ENCODE measurements at regions of chr5 and their contacts with region 1.

Region 1: GRCh38 chr5:150846654-150847333 is 473 bp downstream of the IRGM start:
- DNase-seq: peak; percentile 83
- ATAC-seq: peak; percentile 94
- H3K4me3 Mint-ChIP-seq: peak overlapping the region; percentile 75
- H3K27ac Mint-ChIP-seq: peak overlapping the region; percentile 95
- H3K4me1 Mint-ChIP-seq: peaks cover 39% of the 10 kb centered on the region
- H3K27me3 Mint-ChIP-seq: peaks cover 3% of the 10 kb centered on the region

Region 2: GRCh38 chr5:150458819-150459557 is 387.8 kb before region 1 on chr5:
- CTCF ChIA-PET with region 1: interaction called, 25 read pairs
- POLR2A ChIA-PET with region 1: interaction called, 4 read pairs
- DNase-seq: peak; percentile 90
- ATAC-seq: peak; percentile 93
- H3K4me3 Mint-ChIP-seq: peak overlapping the region; percentile 31
- H3K27ac Mint-ChIP-seq: peak overlapping the region; percentile 83
- H3K4me1 Mint-ChIP-seq: peaks cover 45% of the 10 kb centered on the region
- H3K27me3 Mint-ChIP-seq: no peaks in the 10 kb centered on the region

Region 3: DNA sequence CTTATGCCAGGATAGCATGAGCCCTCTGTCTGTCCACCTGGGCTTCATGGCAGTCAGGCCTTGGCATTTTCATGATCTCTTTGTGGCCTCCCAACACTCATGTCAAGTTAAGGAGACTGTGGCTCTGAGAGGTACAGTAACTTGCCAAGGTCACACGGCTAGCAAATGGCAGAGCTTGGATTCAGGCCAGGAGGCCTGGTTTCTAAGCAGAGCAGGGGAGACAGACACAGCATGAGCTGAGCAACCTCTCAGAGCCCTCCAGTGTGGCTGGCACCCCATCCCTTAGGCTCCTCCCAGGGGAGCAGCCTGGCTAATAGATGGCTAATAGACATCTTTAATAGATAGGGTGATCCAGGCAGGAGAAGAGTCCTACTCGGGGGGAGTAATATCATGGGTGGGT is 202.3 kb before region 1 on chr5:
- CTCF ChIA-PET with region 1: no interaction called
- POLR2A ChIA-PET with region 1: no interaction called
- DNase-seq: no peak
- ATAC-seq: no peak
- H3K4me3 Mint-ChIP-seq: no peak overlapping the region
- H3K27ac Mint-ChIP-seq: no peak overlapping the region
- H3K4me1 Mint-ChIP-seq: no peaks in the 10 kb centered on the region
- H3K27me3 Mint-ChIP-seq: no peaks in the 10 kb centered on the region

Region 4: DNA sequence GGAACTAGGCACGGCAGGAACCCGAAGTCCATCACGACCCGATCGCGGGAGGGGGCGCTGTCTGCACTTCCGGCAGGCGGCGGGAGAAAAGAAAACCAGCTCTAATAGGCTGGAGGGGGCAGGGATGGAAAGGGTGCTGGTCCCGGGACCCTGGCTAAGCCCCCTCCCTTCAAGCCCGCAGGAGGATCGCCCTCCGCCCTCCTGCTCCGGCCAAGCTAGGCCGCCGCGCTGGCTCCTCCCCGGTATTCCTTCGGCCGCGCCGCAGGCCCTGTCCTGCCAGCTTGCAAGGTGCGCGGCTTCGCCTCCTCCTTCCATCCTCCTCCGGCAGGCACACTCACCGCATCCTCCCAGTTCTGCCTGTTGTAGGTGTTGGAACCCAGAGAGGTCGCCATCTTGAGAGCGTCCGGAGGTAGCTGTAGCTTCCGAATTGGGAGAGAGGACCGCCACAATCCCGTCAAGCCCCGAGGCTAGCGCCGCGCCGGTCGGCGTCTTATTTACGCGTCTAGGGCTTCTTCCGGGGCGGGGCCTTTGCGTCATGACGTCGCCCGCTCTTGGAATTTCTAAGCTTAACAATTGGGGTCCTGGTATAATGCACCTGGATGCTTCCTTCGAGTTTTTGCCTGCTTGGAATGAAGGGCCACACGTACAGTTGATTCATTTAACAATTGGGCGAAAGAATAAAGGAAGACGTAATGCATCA is 146.1 kb before region 1 on chr5 and contains the start of gene RBM22:
- CTCF ChIA-PET with region 1: interaction called, 57 read pairs
- POLR2A ChIA-PET with region 1: interaction called, 42 read pairs
- DNase-seq: peak; percentile 95
- ATAC-seq: peak; percentile 96
- H3K4me3 Mint-ChIP-seq: no peak within 1 kb of the TSS
- H3K27ac Mint-ChIP-seq: no peak within 1 kb of the TSS
- H3K4me1 Mint-ChIP-seq: peaks cover 2% of the 10 kb centered on the region
- H3K27me3 Mint-ChIP-seq: no peaks in the 10 kb centered on the region
- total RNA-seq, gene RBM22: 64.0 to 65.2 TPM

Region 5: GRCh38 chr5:150758531-150759333 is 88.1 kb before region 1 on chr5 and contains the start of gene DCTN4:
- CTCF ChIA-PET with region 1: interaction called, 17 read pairs
- POLR2A ChIA-PET with region 1: interaction called, 7 read pairs
- DNase-seq: peak; percentile 95
- ATAC-seq: peak; percentile 98
- H3K4me3 Mint-ChIP-seq: no peak within 1 kb of the TSS
- H3K27ac Mint-ChIP-seq: no peak within 1 kb of the TSS
- H3K4me1 Mint-ChIP-seq: peaks cover 30% of the 10 kb centered on the region
- H3K27me3 Mint-ChIP-seq: no peaks in the 10 kb centered on the region
- total RNA-seq, gene DCTN4: 35.0 to 35.4 TPM

Region 6: DNA sequence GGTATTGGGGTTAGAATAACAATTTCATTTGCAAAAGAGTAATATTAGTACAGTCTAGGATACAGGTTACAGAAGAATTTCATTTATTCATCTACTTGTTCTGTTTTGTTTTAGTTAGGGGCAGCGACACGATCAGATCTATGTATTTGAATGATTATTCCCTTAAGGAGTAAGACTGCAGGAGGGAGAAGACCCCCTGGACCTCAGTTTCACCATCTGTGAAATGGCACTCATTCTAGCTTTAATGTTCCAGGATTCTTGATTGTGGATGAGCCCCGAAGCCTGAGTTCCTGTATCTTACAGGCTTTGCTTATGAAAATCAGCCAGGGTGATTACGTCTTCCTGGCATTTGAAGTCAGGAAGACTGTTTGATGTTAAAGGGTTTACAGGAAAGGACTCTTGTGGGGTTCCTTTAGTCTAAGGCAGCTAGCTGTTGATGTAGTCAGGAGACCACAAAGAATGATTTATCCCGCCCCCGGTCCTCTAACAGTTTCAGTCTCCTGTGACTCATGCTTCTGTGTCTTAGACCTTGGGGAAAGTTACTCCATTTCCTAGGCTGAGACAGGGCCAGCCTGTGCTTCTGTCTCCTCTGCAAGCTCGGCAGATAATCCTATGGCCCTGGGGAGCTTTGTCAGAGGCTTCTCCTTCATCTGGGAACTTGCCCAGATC is 56.7 kb before region 1 on chr5:
- CTCF ChIA-PET with region 1: interaction called, 23 read pairs
- POLR2A ChIA-PET with region 1: interaction called, 13 read pairs
- DNase-seq: peak; percentile 78
- ATAC-seq: peak; percentile 98
- H3K4me3 Mint-ChIP-seq: peak overlapping the region; percentile 54
- H3K27ac Mint-ChIP-seq: peak overlapping the region; percentile 86
- H3K4me1 Mint-ChIP-seq: peaks cover 50% of the 10 kb centered on the region
- H3K27me3 Mint-ChIP-seq: no peaks in the 10 kb centered on the region

Region 7: DNA sequence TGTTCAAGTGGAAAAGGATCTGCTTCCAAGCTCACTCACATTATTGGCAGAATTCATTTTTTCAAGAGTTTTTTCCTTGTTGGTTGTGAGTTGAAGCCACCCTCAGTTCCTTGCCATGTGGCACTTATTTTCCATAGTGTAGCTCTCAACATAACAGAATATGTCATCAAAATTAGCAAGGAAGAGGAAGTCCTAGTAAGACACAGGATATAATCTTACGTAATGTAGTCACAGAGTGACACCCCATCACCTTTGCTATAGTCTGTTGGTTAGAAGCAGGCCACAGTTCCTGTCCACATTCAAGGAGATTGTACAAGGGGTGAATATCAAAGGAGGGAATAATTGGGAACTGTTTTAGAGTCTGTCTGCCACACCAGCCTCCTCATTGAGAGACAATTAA is 15.3 kb after region 1 on chr5:
- CTCF ChIA-PET with region 1: no interaction called
- POLR2A ChIA-PET with region 1: no interaction called
- DNase-seq: no peak
- ATAC-seq: no peak
- H3K4me3 Mint-ChIP-seq: no peak overlapping the region
- H3K27ac Mint-ChIP-seq: no peak overlapping the region
- H3K4me1 Mint-ChIP-seq: no peaks in the 10 kb centered on the region
- H3K27me3 Mint-ChIP-seq: peaks cover 3% of the 10 kb centered on the region

Region 8: DNA sequence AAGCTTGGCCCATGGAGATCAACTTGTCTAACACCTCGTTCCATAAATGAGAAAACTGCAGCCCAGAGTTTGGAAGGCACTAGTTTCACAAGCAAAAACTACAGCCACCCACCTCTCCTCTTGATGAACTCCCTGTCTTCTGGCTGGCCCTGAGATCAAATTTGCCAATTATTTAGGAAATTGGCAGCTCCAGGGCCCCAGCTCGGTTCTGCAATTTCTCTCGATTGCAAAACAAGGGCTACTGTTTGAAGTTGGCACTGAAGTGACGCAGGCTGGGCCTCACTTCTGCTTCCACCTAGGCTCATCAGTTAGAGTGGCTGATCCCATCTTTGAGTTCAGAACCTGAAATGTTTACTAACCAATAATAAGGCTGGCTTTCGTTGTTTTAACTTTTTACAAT is 169.9 kb after region 1 on chr5:
- CTCF ChIA-PET with region 1: no interaction called
- POLR2A ChIA-PET with region 1: no interaction called
- DNase-seq: no peak
- ATAC-seq: no peak
- H3K4me3 Mint-ChIP-seq: no peak overlapping the region
- H3K27ac Mint-ChIP-seq: no peak overlapping the region
- H3K4me1 Mint-ChIP-seq: peaks cover 20% of the 10 kb centered on the region
- H3K27me3 Mint-ChIP-seq: peaks cover 11% of the 10 kb centered on the region

Measured in activated CD8-positive, alpha-beta T cell treated with anti-CD3 and anti-CD28 coated beads, Interleukin-2, amount 10 ng/mL, durations not matched to agents 7 days and 5 days (primary cell).